Calu3 (cell line): ENCODE measurements at regions of chr2 and their contacts with region 1.

Region 1: GRCh38 chr2:118061135-118061955 is 26.9 kb upstream of the INSIG2 start:
- DNase-seq: peak; percentile 52
- H3K4me3 Mint-ChIP-seq: no peak overlapping the region
- H3K27ac Mint-ChIP-seq: no peak overlapping the region
- H3K4me1 Mint-ChIP-seq: peaks cover 48% of the 10 kb centered on the region
- H3K27me3 Mint-ChIP-seq: no peaks in the 10 kb centered on the region
- CTCF ChIP-seq: peak; percentile 42

Region 2: DNA sequence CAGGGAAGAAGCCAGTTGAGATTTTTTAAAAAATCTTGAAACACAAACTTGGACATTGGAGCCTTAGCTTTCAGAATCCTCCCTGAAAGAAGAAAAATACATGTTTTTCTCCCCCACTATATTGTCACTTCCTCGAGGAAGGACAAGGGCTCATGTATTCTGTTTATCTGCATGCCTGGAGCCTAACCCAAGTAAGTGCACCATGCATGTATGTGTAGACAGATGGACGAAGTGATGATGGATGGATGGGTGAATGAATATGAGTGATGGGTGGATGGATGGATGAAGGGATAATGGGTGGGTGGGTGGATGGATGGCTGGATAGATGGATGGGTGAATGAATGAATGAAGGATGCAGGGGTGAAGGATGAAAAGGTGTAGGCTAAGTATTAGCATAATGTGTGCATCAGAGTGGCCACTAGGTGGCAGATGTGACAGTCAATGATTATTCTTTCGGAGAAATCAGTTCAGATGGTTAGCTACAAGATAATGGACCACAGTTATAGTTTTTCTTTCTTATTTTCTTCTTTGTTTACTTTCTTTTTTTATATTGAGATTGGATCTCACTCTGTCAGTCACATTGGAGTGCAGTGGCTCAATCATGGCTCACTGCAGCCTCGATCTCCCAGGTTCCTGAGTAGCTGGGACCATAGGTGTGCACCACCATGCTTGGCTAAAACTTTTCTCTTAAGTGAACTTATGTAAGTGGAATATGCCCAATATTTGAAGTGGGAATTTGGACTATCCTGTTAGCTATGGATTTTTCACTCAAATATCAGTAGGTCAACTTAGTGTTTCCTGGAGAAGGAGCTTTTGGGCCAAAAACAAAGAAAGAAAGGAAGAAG is 29.0 kb before region 1 on chr2:
- CTCF ChIA-PET with region 1: interaction called, 3 read pairs
- intact Hi-C with region 1: loop called (anchors 1 kb)
- DNase-seq: peak; percentile 53
- H3K4me3 Mint-ChIP-seq: no peak overlapping the region
- H3K27ac Mint-ChIP-seq: no peak overlapping the region
- H3K4me1 Mint-ChIP-seq: peaks cover 8% of the 10 kb centered on the region
- H3K27me3 Mint-ChIP-seq: no peaks in the 10 kb centered on the region
- CTCF ChIP-seq: peak; percentile 76

Region 3: GRCh38 chr2:118122594-118123281 is 61.4 kb after region 1 on chr2:
- CTCF ChIA-PET with region 1: no interaction called
- intact Hi-C with region 1: no loop called
- DNase-seq: peak; percentile 58
- H3K4me3 Mint-ChIP-seq: peak overlapping the region; percentile 61
- H3K27ac Mint-ChIP-seq: peak overlapping the region; percentile 99
- H3K4me1 Mint-ChIP-seq: peaks cover 74% of the 10 kb centered on the region
- H3K27me3 Mint-ChIP-seq: no peaks in the 10 kb centered on the region
- CTCF ChIP-seq: no peak